ENCODE measurements at regions of chr2 and their contacts with region 1.

Region 1: DNA sequence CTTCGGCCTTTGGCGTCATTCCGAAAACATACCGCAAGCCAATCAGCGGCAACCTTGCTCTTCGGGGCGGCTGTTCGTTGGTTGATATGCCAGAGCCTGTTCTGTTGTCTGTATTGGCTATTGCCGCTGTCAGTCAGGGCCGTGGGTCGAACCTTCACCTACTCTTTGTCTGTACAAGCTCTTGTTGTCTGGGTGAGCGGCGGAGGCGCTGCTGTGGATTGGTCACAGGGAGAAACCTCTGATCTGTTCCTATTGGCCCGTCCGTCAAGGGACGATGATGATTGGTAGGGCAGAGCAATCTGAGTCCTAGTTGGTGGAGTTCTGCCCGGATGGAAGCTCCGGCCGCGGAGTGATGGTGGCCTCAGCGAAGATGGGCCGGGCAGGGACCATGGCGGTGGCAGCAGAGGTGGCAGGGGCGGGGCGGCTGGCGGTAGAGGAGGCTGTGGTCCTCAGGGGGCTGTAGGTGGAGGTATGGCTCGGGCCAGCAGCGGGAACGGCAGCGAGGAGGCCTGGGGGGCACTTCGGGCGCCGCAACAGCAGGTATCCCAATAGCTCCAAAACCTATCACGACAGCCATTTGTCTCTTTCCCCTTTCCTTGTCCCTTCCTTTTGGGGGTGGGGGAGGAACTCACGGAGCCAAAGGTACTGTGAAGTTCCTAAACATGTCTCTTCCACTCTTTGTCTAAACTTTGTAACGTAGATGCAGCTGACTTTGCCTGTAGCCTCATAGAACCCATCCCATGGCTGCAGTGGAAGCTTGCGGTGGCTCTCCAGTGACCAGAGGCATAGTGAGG is at the start of gene WBP1:
- DNase-seq: peak; percentile 95
- CTCF ChIP-seq: no peak

Region 2: DNA sequence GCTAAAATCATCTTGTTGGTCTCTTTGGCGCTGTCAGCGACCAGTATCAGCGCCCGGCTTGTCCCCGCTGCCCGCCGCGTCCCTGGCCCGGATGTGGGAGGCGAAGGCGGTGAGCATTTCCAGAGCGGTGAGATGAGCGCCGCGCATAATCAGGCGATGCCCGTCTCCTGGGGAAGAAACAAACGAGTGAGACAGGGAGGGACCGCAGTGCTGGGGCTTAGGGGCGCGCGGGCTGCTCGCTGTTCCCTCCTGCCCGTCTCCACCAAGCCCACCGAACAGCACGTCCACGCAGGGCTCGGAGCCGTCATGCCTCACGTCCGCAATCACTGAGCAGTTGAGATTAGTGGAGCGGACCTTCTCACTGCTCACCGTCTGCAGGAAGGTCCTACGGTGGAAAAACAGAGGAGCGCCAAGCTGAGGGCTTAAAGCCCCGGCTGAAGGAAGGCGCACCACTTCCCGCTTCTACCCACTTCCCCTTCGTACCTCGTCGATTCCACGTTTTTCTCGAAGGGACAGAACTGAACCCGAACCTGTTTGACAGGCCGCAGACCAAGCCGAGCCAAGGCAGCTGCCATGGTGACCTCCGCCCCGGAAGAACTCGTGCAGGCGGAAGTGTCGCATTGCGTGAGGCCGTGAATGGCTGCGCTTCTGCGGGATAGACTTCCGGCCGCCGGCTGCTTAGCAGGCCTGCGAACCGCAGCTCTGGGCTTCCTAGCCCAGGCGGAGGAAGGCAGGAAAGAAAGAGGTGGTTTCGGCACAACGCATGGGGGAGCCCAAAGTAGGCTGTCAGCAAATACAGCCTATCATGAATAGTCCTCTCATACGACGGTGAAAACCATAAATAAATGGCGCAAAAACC is 14.0 kb after region 1 on chr2 and contains the start of gene MRPL53:
- CTCF ChIA-PET with region 1: interaction called, 26 read pairs
- POLR2A ChIA-PET with region 1: interaction called, 8 read pairs
- DNase-seq: peak; percentile 88
- CTCF ChIP-seq: no peak

Region 3: GRCh38 chr2:74777161-74777900 is 319.0 kb after region 1 on chr2:
- CTCF ChIA-PET with region 1: no interaction called
- POLR2A ChIA-PET with region 1: no interaction called
- DNase-seq: peak; percentile 66
- CTCF ChIP-seq: no peak

Measured in GM10248 (cell line).